CD8-positive, alpha-beta T cell (primary cell): ENCODE measurements at regions of chr1 and their contacts with region 1.

Region 1: DNA sequence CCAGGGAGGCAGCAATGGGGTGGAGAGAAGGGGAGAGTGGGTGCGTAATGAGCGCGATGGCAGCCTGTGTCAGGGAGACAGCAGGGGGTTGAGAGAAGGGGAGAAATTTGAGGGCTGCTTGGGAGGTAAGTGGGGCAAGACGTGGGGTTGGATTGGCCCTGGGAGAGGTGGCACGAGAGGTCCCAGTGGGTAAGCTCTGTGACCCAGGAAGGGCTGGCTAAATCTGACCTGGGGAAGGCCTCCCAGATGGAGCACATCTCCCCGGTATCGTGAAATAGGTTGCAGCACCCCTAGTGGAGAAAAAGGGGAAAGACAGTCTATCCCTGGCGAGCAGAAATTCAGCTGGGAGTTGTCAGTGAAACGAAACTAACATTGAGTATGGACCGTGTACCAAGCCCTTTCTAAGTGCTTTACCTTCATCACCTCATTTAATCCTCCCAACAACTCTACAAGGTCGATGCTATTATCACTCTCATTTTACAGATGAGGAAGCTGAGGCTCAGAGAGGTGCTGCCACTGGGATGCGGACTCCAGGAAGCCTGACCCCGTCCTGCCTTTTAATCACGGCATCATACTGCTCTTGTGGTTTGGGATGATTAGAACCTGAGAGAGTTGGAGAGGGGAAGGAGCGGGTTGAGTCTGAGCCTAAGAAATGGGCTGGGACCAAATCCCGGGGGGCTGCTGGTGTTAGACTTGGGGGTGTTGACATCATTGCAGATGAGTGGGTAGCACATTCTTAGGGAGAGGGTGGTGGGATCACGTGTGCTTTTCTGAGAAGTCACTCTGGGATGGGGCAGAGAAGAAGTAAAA is 56.6 kb upstream of the RPL11 start:
- DNase-seq: peak in 7 of 9 experiments; percentile 29 to 83 (median 58)
- ATAC-seq: peak; percentile 92
- H3K4me3 ChIP-seq: peak overlapping the region; percentile 46 to 52
- H3K4me3 Mint-ChIP-seq: peak overlapping the region; percentile 76
- H3K27ac ChIP-seq: peak overlapping the region; percentile 5 to 18
- H3K27ac Mint-ChIP-seq: peak overlapping the region; percentile 92
- H3K4me1 ChIP-seq: peaks cover 25% of the 10 kb centered on the region
- H3K4me1 Mint-ChIP-seq: peaks cover 33% of the 10 kb centered on the region
- H3K27me3 ChIP-seq: no peaks in the 10 kb centered on the region
- H3K27me3 Mint-ChIP-seq: no peaks in the 10 kb centered on the region
- CTCF ChIP-seq: peak; percentile 89

Region 2: DNA sequence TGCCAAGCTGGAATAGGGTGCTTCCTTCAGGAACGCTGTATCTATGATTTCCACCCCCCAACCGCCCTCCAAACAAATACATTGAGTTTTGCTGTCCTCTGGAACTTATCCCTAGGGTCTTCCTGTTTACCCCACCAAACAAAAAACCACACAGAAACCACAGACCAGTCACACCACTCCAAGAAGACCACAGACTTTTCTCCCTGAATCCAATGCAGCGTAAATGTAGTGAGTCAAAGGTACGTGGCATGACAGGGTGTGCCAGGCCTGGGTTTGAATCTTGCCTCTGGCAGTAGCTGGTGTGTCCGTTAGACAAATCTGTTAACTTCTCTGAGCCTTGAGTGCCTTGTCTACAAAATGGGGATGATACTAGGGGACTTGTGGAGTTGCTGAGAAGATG is 178.8 kb before region 1 on chr1:
- CTCF ChIA-PET with region 1: no interaction called
- POLR2A ChIA-PET with region 1: no interaction called
- intact Hi-C with region 1: no loop called
- DNase-seq: no peak
- ATAC-seq: no peak
- H3K4me3 ChIP-seq: no peak overlapping the region
- H3K4me3 Mint-ChIP-seq: no peak overlapping the region
- H3K27ac ChIP-seq: no peak overlapping the region
- H3K27ac Mint-ChIP-seq: no peak overlapping the region
- H3K4me1 ChIP-seq: peaks cover 14% of the 10 kb centered on the region
- H3K4me1 Mint-ChIP-seq: peaks cover 25% of the 10 kb centered on the region
- H3K27me3 ChIP-seq: peaks cover 0 to 10% of the 10 kb centered on the region in 2 experiments
- H3K27me3 Mint-ChIP-seq: peaks cover 13% of the 10 kb centered on the region
- CTCF ChIP-seq: no peak

Region 3: DNA sequence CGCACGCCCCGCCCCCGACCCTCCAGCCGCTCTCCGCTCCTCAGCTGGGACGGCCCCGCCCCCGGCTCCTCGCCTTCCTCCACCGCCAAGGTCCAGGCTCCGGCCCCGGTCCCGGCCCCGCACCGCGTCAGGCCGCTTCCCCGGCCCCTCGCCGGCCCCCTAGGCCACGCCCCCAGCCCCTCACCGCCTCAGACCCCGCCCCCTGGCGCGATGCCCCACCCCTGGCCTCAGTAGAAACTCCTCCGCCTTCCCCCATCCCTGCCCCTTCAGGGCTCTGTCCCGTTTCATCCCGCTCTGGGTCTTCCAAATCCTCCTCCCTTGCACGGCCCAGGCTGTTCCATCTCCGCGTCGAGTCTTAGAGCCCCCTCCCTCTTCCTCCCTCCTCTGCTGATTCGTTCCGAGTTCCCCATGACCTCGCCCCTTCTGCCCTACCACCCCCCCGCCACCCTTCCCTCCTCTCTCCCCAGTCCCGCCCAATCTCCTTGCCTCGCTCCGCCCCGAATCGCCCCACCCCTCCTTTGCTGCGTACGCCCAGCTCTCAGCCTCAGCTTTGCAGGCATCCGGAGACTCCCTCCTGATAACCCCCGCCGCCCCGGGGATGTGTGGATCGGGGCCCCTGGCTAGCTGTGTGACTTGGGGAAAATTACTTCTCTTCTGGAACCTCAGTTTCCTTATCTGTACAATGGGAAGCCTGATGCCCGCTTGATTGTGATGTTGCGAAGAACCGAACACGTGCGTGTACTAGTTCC is 150.6 kb before region 1 on chr1:
- CTCF ChIA-PET with region 1: interaction called, 13 read pairs
- POLR2A ChIA-PET with region 1: no interaction called
- intact Hi-C with region 1: loop called (anchors 5 kb)
- DNase-seq: peak; percentile 84 to 96 (median 91)
- ATAC-seq: peak; percentile 91
- H3K4me3 ChIP-seq: peak overlapping the region; percentile 45 to 57
- H3K4me3 Mint-ChIP-seq: peak overlapping the region; percentile 87
- H3K27ac ChIP-seq: no peak overlapping the region
- H3K27ac Mint-ChIP-seq: peak overlapping the region; percentile 57
- H3K4me1 ChIP-seq: peaks cover 12% of the 10 kb centered on the region
- H3K4me1 Mint-ChIP-seq: peaks cover 17% of the 10 kb centered on the region
- H3K27me3 ChIP-seq: peaks cover 0 to 11% of the 10 kb centered on the region in 2 experiments
- H3K27me3 Mint-ChIP-seq: peaks cover 9% of the 10 kb centered on the region
- CTCF ChIP-seq: no peak

Region 4: GRCh38 chr1:23530747-23531561 is 104.1 kb before region 1 on chr1 and contains the start of gene E2F2:
- CTCF ChIA-PET with region 1: interaction called, 41 read pairs
- POLR2A ChIA-PET with region 1: interaction called, 4 read pairs
- intact Hi-C with region 1: no loop called
- DNase-seq: peak; percentile 56 to 91 (median 82)
- ATAC-seq: peak; percentile 71
- H3K4me3 ChIP-seq: peak within 1 kb of the TSS; percentile 42 to 52
- H3K4me3 Mint-ChIP-seq: peak within 1 kb of the TSS; percentile 85
- H3K27ac ChIP-seq: peak within 1 kb of the TSS in 1 of 2 experiments; percentile 72
- H3K27ac Mint-ChIP-seq: peak within 1 kb of the TSS; percentile 13
- H3K4me1 ChIP-seq: peaks cover 60% of the 10 kb centered on the region
- H3K4me1 Mint-ChIP-seq: peaks cover 63% of the 10 kb centered on the region
- H3K27me3 ChIP-seq: no peaks in the 10 kb centered on the region
- H3K27me3 Mint-ChIP-seq: no peaks in the 10 kb centered on the region
- CTCF ChIP-seq: no peak
- total RNA-seq, gene E2F2: 0.19 to 0.38 TPM

Region 5: GRCh38 chr1:23577056-23578004 is 57.7 kb before region 1 on chr1:
- CTCF ChIA-PET with region 1: interaction called, 84 read pairs
- POLR2A ChIA-PET with region 1: no interaction called
- intact Hi-C with region 1: no loop called
- DNase-seq: no peak
- ATAC-seq: peak; percentile 74
- H3K4me3 ChIP-seq: no peak overlapping the region
- H3K4me3 Mint-ChIP-seq: peak overlapping the region; percentile 50
- H3K27ac ChIP-seq: peak overlapping the region; percentile 7 to 10
- H3K27ac Mint-ChIP-seq: peak overlapping the region; percentile 87
- H3K4me1 ChIP-seq: peaks cover 60% of the 10 kb centered on the region
- H3K4me1 Mint-ChIP-seq: peaks cover 62% of the 10 kb centered on the region
- H3K27me3 ChIP-seq: no peaks in the 10 kb centered on the region
- H3K27me3 Mint-ChIP-seq: no peaks in the 10 kb centered on the region
- CTCF ChIP-seq: no peak

Region 6: GRCh38 chr1:23598424-23598823 is 36.6 kb before region 1 on chr1:
- CTCF ChIA-PET with region 1: interaction called, 207 read pairs
- POLR2A ChIA-PET with region 1: interaction called, 5 read pairs
- intact Hi-C with region 1: loop called (anchors 2 kb)
- DNase-seq: no peak
- ATAC-seq: no peak
- H3K4me3 ChIP-seq: peak overlapping the region in 1 of 2 experiments; percentile 1
- H3K4me3 Mint-ChIP-seq: no peak overlapping the region
- H3K27ac ChIP-seq: peak overlapping the region in 1 of 2 experiments; percentile 53
- H3K27ac Mint-ChIP-seq: no peak overlapping the region
- H3K4me1 ChIP-seq: peaks cover 94% of the 10 kb centered on the region
- H3K4me1 Mint-ChIP-seq: peaks cover 93% of the 10 kb centered on the region
- H3K27me3 ChIP-seq: no peaks in the 10 kb centered on the region
- H3K27me3 Mint-ChIP-seq: no peaks in the 10 kb centered on the region
- CTCF ChIP-seq: no peak

Region 7: GRCh38 chr1:23619299-23620188 is 15.5 kb before region 1 on chr1:
- CTCF ChIA-PET with region 1: interaction called, 125 read pairs
- POLR2A ChIA-PET with region 1: interaction called, 32 read pairs
- intact Hi-C with region 1: loop called in 1 of 2 experiments (anchors 1 kb)
- DNase-seq: peak; percentile 66 to 92 (median 85)
- ATAC-seq: peak; percentile 84
- H3K4me3 ChIP-seq: peak overlapping the region; percentile 44 to 50
- H3K4me3 Mint-ChIP-seq: peak overlapping the region; percentile 72
- H3K27ac ChIP-seq: peak overlapping the region; percentile 62 to 68
- H3K27ac Mint-ChIP-seq: peak overlapping the region; percentile 95
- H3K4me1 ChIP-seq: peaks cover 80% of the 10 kb centered on the region
- H3K4me1 Mint-ChIP-seq: peaks cover 89% of the 10 kb centered on the region
- H3K27me3 ChIP-seq: no peaks in the 10 kb centered on the region
- H3K27me3 Mint-ChIP-seq: no peaks in the 10 kb centered on the region
- CTCF ChIP-seq: no peak